Cardiac septum (tissue), 1 donor: ENCODE measurements at regions of chr7 and their contacts with region 1.

Region 1: DNA sequence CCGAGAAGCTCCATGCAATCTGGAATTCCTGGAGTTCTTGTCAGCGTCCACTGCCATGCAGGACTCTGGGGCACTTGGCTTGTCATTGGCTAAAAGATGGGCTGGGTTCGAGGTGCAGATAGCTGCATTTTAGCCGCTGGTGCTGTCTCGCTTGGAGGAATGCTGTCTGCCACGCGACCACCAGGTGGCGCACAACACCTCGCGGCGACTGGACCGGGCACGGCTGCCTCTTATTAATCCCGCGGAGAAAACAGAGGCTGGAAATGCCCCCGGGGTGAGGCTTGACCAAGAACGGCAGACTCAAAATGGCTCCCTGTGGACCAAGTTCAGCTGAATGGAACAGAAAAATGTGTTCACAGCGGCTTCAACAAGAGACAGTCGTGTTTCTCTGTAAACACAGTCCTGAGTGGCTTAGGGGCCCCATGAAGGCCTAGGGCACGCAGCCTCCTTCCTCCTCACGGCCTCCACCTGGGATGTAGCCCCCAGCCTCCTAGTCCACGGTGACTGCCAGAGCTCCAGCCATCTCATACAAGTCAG is 46.2 kb downstream of the AOC1 start:
- DNase-seq: peak; percentile 91

Region 2: DNA sequence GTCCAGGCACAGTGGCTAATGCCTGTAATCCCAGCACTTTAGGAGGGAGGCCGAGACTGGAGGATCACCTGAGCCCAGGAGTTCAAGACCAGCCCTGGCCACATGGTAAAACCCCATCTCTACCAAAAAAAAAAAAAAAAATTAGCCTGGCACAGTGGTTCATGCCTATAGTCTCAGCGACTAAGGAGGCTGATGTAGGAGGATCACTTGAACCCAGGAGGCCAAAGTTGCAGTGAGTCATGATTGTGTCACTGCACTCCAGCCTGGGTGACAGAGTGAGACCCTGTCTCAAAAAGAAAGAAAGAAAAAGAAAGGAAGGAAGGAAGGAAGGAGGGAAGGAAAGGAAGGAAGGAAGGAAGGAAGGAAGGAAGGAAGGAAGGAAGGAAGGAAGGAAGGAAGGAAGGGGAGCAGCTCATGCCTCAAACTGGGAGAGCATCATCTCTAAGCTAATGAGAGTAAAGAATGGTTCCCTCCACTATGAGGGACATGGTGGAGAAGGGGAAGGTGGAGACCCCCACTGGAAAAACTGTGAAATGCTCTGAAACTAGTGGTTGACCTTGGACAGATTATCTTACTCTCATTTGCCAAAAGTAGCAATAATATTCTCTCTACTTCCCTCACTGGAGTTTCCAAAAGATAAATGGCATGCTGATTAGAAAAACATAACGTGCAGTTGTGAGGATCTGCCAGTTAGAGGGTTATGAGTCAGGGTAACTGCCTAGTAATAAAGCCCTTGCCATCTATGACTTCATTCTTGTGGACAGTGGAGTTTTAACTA is 144.5 kb before region 1 on chr7:
- intact Hi-C with region 1: no loop called
- DNase-seq: no peak

Region 3: GRCh38 chr7:151017953-151018420 is 119.4 kb after region 1 on chr7:
- intact Hi-C with region 1: loop called (anchors 2 kb)
- DNase-seq: peak; percentile 87